Activated CD4-positive, alpha-beta memory T cell treated with anti-CD3 and anti-CD28 coated beads for 36 hours (primary cell): ENCODE measurements at regions of chr9 and their contacts with region 1.

Region 1: DNA sequence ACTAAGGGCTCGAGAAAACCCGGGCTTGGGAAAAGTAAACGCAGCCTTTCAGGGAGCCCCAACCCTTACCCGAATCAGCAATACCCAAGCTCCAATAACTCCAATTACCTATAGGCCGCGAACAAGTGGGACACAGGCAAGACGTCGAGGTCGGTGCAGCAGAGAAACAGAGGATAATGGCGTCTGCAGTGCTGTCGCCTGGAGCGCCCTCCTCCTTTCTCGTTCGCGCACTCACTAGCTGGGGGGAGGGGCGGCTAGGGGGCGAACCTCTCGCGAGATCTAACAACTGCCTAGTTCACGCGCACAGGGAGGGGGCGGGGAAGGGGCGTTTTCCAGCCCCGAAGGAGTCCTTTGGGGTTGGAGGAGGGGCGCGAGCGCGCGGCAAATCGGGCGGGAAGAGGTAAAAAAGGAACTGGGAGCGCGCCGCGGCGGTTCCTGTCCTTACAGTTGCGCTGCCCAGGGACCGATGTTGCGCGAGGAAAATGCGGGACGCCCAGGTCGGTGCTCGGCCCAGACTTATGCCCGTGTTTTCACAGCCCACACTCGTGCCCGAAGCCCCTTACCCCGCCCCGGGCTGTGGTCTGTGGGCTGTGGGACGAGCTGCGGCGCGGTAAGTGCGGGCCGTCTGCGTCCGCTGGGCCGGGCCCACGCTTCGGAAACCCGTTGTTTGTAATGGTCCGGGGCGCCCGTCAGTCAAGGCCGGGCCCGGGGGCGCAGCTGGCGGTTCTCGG is at the start of gene RMI1:
- DNase-seq: peak; percentile 99
- H3K4me3 Mint-ChIP-seq: peak within 1 kb of the TSS; percentile 96
- H3K27ac Mint-ChIP-seq: peak within 1 kb of the TSS; percentile 99
- H3K4me1 Mint-ChIP-seq: peaks cover 43% of the 10 kb centered on the region
- H3K27me3 Mint-ChIP-seq: no peaks in the 10 kb centered on the region
- total RNA-seq, gene RMI1: 20.3 to 22.6 TPM

Region 2: GRCh38 chr9:83707768-83708514 is 272.6 kb before region 1 on chr9 and contains the start of gene UBQLN1:
- CTCF ChIA-PET with region 1: no interaction called
- POLR2A ChIA-PET with region 1: interaction called, 18 read pairs
- intact Hi-C with region 1: loop called (anchors 1 kb)
- DNase-seq: peak; percentile 94
- H3K4me3 Mint-ChIP-seq: peak within 1 kb of the TSS; percentile 87
- H3K27ac Mint-ChIP-seq: peak within 1 kb of the TSS; percentile 99
- H3K4me1 Mint-ChIP-seq: peaks cover 45% of the 10 kb centered on the region
- H3K27me3 Mint-ChIP-seq: no peaks in the 10 kb centered on the region
- total RNA-seq, gene UBQLN1: 88.8 to 101 TPM

Region 3: GRCh38 chr9:83956434-83957247 is 23.9 kb before region 1 on chr9:
- CTCF ChIA-PET with region 1: interaction called, 4 read pairs
- POLR2A ChIA-PET with region 1: interaction called, 13 read pairs
- intact Hi-C with region 1: loop called (anchors 1 kb)
- DNase-seq: peak; percentile 78
- H3K4me3 Mint-ChIP-seq: peak overlapping the region; percentile 96
- H3K27ac Mint-ChIP-seq: peak overlapping the region; percentile 92
- H3K4me1 Mint-ChIP-seq: peaks cover 18% of the 10 kb centered on the region
- H3K27me3 Mint-ChIP-seq: no peaks in the 10 kb centered on the region

Region 4: GRCh38 chr9:84002344-84002743 is 21.8 kb after region 1 on chr9:
- CTCF ChIA-PET with region 1: no interaction called
- POLR2A ChIA-PET with region 1: interaction called, 10 read pairs
- intact Hi-C with region 1: no loop called
- DNase-seq: no peak
- H3K4me3 Mint-ChIP-seq: no peak overlapping the region
- H3K27ac Mint-ChIP-seq: no peak overlapping the region
- H3K4me1 Mint-ChIP-seq: peaks cover 12% of the 10 kb centered on the region
- H3K27me3 Mint-ChIP-seq: no peaks in the 10 kb centered on the region

Region 5: DNA sequence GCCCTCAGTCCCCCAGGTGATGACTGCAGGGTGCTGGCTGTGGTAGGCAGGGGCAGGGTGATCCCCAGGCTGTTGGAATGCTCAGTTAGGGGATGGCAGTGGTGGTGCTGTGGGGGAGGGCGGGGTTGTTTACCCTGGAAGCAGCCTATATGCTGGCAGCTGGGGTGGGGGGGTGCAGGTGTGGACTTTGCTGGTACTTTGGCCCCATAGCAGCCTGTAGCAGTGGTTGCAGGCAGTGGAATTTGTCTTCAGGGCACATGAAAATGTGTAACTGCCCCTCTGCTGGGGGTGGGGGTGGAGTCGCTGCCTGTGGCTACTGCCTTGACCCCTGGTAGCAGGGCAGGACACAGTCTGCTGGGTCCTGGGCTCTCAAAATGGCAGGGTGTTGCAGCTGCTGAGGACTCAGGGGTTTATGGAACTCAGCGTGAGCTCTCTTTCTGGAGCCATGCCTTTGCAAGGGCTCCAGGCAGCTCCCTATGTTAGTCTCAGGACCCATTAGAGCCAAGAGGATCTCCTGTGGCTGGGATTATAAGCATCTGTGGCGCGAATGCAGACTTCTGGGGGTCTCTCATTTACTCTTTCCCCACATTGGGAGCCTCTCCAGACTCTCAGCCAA is 65.0 kb after region 1 on chr9:
- CTCF ChIA-PET with region 1: no interaction called
- POLR2A ChIA-PET with region 1: no interaction called
- intact Hi-C with region 1: no loop called
- DNase-seq: no peak
- H3K4me3 Mint-ChIP-seq: no peak overlapping the region
- H3K27ac Mint-ChIP-seq: no peak overlapping the region
- H3K4me1 Mint-ChIP-seq: no peaks in the 10 kb centered on the region
- H3K27me3 Mint-ChIP-seq: peaks cover 15% of the 10 kb centered on the region

Region 6: DNA sequence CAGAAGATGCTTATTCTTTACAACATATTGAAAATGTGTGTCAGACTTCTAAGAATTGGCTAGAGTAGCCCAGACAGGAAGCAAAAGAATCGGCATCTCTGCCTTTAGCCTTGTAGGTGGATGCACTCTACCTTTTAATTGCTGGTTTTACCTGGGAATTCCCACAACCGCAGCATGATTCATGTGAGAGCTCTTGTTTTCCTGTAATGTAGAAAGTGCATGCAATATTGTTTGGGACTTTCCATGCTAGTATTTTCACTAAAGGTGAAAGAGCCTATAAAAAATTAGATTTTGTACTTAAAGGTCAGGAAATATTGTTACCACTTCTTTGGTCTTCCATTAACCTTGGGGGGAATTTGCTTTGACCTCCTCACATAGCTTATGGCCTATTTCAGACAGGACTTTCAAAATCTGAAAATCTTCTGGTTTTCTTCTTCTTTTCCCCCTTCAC is 778.8 kb after region 1 on chr9:
- CTCF ChIA-PET with region 1: no interaction called
- POLR2A ChIA-PET with region 1: no interaction called
- intact Hi-C with region 1: loop called (anchors 10 kb)
- DNase-seq: peak; percentile 65
- H3K4me3 Mint-ChIP-seq: peak overlapping the region; percentile 6
- H3K27ac Mint-ChIP-seq: peak overlapping the region; percentile 74
- H3K4me1 Mint-ChIP-seq: peaks cover 47% of the 10 kb centered on the region
- H3K27me3 Mint-ChIP-seq: no peaks in the 10 kb centered on the region